Breast epithelium (tissue), 4 donors: ENCODE measurements at regions of chr6 and their contacts with region 1.

Region 1: DNA sequence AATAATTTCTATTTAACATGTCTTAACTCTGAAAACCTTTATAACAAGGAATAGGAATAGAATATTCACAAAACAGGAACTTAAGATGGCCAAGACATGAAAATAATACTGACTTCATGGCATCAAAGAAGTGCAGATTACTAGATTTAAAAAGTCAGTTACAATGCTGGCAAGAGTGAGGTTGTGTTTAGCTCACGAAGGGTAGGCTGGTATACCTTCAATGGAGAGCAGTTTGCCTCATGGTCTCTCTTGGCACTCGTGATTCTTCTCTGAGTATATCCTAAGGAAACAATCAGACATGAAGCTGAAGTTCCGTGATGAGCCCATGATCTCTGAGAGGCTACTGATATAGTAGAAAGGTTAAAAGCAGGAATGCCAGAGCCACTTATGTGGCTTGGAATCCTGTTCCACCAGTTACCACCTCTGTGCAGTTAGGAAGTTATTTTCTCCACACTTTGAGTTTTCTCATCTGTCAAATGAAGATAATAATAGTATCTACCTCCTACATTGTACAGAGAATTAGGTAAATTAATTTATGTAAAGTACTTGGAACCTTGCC is 7.2 kb downstream of the NCOA7 start:
- DNase-seq: no peak
- H3K4me3 ChIP-seq: no peak overlapping the region
- H3K27ac ChIP-seq: peak overlapping the region; percentile 4 to 5
- H3K4me1 ChIP-seq: peaks cover 0 to 2% of the 10 kb centered on the region in 2 donors
- H3K27me3 ChIP-seq: no peaks in the 10 kb centered on the region
- CTCF ChIP-seq: no peak
- POLR2A ChIP-seq: no peak

Region 2: GRCh38 chr6:125477844-125478243 is 320.1 kb before region 1 on chr6:
- intact Hi-C with region 1: no loop called
- DNase-seq: no peak
- H3K4me3 ChIP-seq: no peak overlapping the region
- H3K27ac ChIP-seq: no peak overlapping the region
- H3K4me1 ChIP-seq: no peaks in the 10 kb centered on the region
- H3K27me3 ChIP-seq: no peaks in the 10 kb centered on the region
- CTCF ChIP-seq: no peak
- POLR2A ChIP-seq: no peak

Region 3: DNA sequence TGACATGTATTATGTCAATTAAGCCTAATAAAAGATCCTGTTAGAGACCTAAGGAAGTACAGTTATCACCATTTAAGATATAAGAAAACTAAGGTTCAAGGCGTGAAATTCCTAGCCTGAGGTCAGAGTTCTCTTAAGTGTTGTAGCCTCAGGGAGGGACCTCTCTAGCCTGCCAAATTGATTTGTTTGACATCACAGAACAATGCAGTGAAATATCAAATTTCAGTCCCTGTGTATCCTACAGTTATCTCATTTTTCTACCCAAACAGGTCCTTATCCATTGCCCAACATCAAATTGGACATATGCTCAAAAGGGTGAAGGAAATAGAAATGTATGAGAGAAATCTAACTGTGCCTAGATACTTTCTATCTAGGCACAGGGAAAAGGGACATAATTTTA is 55.8 kb after region 1 on chr6:
- intact Hi-C with region 1: loop called (anchors 2 kb)
- DNase-seq: no peak
- H3K4me3 ChIP-seq: no peak overlapping the region
- H3K27ac ChIP-seq: no peak overlapping the region
- H3K4me1 ChIP-seq: no peaks in the 10 kb centered on the region
- H3K27me3 ChIP-seq: no peaks in the 10 kb centered on the region
- CTCF ChIP-seq: no peak
- POLR2A ChIP-seq: no peak

Region 4: GRCh38 chr6:126176282-126176681 is 378.3 kb after region 1 on chr6:
- intact Hi-C with region 1: no loop called
- DNase-seq: no peak
- H3K4me3 ChIP-seq: no peak overlapping the region
- H3K27ac ChIP-seq: no peak overlapping the region
- H3K4me1 ChIP-seq: no peaks in the 10 kb centered on the region
- H3K27me3 ChIP-seq: no peaks in the 10 kb centered on the region
- CTCF ChIP-seq: no peak
- POLR2A ChIP-seq: no peak